PC-9 (cell line): ENCODE measurements at regions of chr17 and their contacts with region 1.

Region 1: GRCh38 chr17:2730764-2731353 is 18.6 kb downstream of the CCDC92B start:
- DNase-seq: no peak
- H3K4me3 ChIP-seq: no peak overlapping the region
- H3K27ac ChIP-seq: no peak overlapping the region
- H3K4me1 ChIP-seq: no peaks in the 10 kb centered on the region
- H3K27me3 ChIP-seq: peaks cover 34% of the 10 kb centered on the region
- CTCF ChIP-seq: no peak

Region 2: DNA sequence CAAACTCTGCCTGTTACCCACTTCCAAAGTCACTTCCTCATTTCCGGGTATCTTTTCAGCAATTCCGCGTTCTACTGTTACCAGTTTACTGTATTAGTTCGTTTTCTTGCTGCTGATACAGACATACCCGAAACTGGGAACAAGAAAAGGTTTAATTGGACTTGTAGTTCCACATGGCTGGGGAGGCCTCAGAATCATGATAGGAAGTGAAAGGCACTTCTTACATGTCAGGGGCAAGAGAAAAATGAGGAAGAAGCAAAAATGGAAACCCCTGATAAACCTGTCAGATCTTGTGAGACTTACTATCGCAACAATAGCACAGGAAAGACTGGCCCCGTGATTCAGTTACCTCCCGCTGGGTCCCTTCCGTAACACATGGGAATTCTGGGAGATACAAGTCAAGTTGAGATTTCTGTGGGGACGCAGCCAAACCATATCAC is 106.5 kb before region 1 on chr17:
- CTCF ChIA-PET with region 1: no interaction called
- POLR2A ChIA-PET with region 1: no interaction called
- intact Hi-C with region 1: no loop called
- DNase-seq: no peak
- H3K4me3 ChIP-seq: no peak overlapping the region
- H3K27ac ChIP-seq: no peak overlapping the region
- H3K4me1 ChIP-seq: no peaks in the 10 kb centered on the region
- H3K27me3 ChIP-seq: no peaks in the 10 kb centered on the region
- CTCF ChIP-seq: no peak

Region 3: DNA sequence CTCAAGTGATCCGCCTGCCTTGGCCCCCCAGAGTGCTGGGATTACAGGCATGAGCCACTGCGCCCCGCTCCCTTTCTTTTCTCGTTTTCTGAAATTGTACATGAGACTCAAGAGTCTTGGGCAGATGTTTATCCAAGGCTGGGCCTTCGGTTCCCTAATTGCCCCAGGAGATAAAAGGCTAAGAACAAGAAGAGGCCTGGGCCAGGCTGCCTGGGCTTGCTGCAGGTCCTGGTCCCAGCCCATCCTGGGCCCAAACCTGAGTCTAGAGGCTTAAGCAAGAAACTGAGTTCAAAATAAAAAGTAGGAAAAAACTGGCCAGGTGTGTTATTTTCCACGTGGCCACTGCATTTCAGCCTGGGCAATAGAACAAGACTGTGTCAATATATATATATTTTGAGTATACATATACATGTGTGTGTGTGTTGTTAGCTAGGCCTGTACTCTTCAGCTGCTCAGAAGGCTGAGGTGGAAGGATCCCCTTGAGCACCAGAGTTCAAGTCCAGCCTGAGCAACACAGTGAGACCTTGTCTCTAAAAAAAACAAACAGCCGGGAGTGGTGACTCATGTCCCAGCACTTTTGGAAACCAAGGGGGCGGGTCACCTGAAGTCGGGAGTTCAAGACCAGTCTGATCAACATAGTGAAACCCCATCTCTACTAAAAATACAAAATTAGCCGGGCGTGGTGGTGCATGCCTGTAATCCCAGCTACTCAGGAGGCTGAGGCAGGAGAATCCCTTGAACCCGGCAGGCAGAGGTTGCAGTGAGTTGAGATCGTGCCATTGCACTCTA is 12.5 kb before region 1 on chr17:
- CTCF ChIA-PET with region 1: no interaction called
- POLR2A ChIA-PET with region 1: interaction called, 14 read pairs
- intact Hi-C with region 1: no loop called
- DNase-seq: no peak
- H3K4me3 ChIP-seq: no peak overlapping the region
- H3K27ac ChIP-seq: no peak overlapping the region
- H3K4me1 ChIP-seq: no peaks in the 10 kb centered on the region
- H3K27me3 ChIP-seq: peaks cover 5% of the 10 kb centered on the region
- CTCF ChIP-seq: no peak

Region 4: DNA sequence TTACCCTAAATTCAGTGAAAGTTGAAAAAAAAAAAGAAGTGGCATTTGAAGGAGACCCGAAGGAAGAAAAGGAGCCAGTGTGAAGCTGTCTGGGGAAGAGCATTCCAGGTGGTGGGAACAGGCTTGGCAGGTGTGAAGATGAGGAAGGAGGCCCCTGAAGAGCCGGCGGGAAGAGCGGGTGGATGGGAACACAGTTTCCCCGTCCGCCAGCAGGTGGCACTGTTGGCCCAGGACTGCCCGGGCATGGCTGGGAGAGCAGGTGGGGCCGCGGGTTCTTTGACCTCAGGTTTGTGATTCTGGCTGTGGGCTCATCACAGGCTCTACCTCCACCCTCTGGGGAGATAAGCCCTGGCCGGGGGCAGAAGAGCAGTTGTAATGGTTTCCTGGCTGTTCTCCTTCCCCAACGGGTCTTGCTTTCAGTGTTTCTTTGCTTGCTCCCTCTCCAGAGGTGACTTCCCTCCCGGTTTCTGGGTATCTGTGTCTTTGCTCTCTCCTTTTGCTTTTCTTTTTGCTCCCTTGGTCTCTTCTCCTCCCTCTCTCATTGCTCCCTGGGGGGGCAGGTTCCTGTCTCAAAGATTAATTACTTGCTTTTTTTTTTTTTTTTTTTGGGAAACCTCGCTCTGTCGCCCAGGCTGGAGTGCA is 97.7 kb after region 1 on chr17:
- CTCF ChIA-PET with region 1: no interaction called
- POLR2A ChIA-PET with region 1: no interaction called
- intact Hi-C with region 1: no loop called
- DNase-seq: peak in 1 of 2 experiments; percentile 85
- H3K4me3 ChIP-seq: no peak overlapping the region
- H3K27ac ChIP-seq: no peak overlapping the region
- H3K4me1 ChIP-seq: no peaks in the 10 kb centered on the region
- H3K27me3 ChIP-seq: 0 out of 2 replicates have a peak, but pooled peaks cover 3% of the 10 kb centered on the region
- CTCF ChIP-seq: peak; percentile 93

Region 5: DNA sequence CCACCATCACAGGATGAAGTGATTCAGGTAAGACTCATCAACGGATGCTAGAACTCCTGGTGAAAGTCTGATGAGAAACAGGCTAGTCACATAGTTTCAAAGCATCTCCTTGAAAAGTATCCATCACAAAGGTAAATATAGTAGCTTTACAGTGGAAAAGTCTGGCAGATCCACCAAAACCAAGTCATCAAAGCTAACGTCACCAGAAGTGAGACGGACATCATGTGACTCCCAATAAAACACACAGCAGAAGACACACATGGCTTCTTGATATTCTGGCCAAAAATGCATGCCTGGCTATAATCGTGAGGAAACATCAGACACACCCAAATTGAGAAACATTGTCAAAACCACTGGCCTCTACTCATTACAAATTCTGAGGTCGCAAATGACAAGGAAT is 844.7 kb after region 1 on chr17:
- CTCF ChIA-PET with region 1: no interaction called
- POLR2A ChIA-PET with region 1: no interaction called
- intact Hi-C with region 1: no loop called
- DNase-seq: peak in 1 of 2 experiments; percentile 65
- H3K4me3 ChIP-seq: no peak overlapping the region
- H3K27ac ChIP-seq: peak overlapping the region; percentile 68
- H3K4me1 ChIP-seq: peaks cover 15% of the 10 kb centered on the region
- H3K27me3 ChIP-seq: no peaks in the 10 kb centered on the region
- CTCF ChIP-seq: no peak